Pancreas (tissue), 10 donors: ENCODE measurements at regions of chr22 and their contacts with region 1.

Region 1: GRCh38 chr22:31952459-31952858 is 8.1 kb downstream of the YWHAH start:
- DNase-seq: no peak
- ATAC-seq: peak; percentile 67 to 86 (median 74)
- H3K4me3 ChIP-seq: no peak overlapping the region
- H3K27ac ChIP-seq: peak overlapping the region in 2 of 4 donors; percentile 22 to 71
- H3K4me1 ChIP-seq: peaks cover 20 to 44% (median 38%) of the 10 kb centered on the region in 3 donors
- H3K27me3 ChIP-seq: no peaks in the 10 kb centered on the region
- CTCF ChIP-seq: no peak

Region 2: DNA sequence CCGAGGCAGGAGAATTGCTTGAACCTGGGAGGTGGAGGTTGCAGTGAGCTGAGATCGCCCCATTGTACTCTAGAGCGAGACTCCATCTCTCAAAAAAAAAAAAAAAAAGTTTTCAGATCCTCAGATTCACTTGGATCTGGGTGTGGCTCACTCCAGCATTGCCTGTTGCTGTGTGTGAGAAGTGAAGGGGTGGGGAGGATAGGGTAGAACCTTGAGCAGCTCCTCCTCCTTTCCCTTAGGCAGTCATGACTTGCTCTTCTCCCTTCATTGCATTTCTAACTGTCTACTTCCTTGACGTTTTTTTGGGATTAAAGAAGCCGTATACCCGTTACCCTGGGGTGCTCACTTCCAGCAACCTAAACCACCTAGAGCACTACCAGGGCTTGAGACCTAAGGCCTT is 71.3 kb before region 1 on chr22:
- intact Hi-C with region 1: loop called in 1 of 3 experiments (anchors 5 kb)
- DNase-seq: no peak
- ATAC-seq: no peak
- H3K4me3 ChIP-seq: no peak overlapping the region
- H3K27ac ChIP-seq: peak overlapping the region in 1 of 4 donors; percentile 55
- H3K4me1 ChIP-seq: peaks cover 0 to 4% (median 0%) of the 10 kb centered on the region in 3 donors
- H3K27me3 ChIP-seq: no peaks in the 10 kb centered on the region
- CTCF ChIP-seq: no peak